ENCODE measurements at regions of chrX and their contacts with region 1.

Region 1: GRCh38 chrX:38304010-38304409 is 23.3 kb downstream of the RPGR start:
- DNase-seq: no peak
- H3K4me3 ChIP-seq: 0 out of 4 replicates have a peak overlapping the region, but pooled peaks of 1 of the 2 experiments have one; percentile 3
- H3K27ac ChIP-seq: no peak overlapping the region
- H3K4me1 ChIP-seq: no peaks in the 10 kb centered on the region
- H3K27me3 ChIP-seq: no peaks in the 10 kb centered on the region
- CTCF ChIP-seq: peak; percentile 50
- EP300 ChIP-seq: no peak
- RAD21 ChIP-seq: no peak

Region 2: DNA sequence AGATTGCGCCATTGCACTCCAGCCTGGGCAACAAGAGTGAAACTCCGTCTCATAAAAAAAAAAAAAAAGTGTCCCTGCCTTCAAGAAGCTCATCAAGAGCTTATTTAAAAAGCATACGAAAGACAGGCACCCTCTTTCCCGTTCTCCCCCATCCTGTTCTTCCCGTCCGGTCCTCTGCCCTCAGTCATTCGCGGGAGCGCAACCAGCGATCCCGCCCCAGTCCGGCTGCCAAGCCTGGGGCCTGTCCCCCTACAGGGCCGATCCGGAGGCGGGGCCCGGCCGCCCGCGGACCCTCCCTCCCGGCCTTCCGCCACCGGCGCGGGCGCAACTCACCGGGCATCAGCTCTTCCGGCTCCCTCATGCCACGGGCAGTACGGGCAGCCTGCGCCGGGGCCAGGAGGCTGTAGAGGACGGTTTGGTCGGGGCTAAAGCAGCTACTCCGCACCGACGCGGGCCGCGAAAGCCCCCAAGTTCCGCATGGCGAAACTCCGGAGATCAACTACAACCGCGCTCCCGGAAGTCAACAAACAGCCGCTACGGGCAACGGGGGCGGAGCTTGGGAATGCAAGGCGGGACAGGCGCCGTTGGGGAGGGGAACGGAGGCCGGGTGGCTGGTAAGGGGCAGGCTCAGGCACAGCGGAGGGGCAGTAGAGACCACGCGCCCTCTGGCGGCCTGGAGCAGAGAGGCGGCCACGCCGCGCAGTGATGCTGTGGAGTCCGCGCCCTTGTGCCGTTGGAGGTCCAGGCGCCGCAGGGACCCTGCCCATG is 23.2 kb after region 1 on chrX and contains the start of gene RPGR:
- CTCF ChIA-PET with region 1: interaction called, 13 read pairs
- POLR2A ChIA-PET with region 1: no interaction called
- DNase-seq: peak; percentile 91
- H3K4me3 ChIP-seq: peak within 1 kb of the TSS; percentile 69 to 73
- H3K27ac ChIP-seq: peak within 1 kb of the TSS; percentile 56 to 96
- H3K4me1 ChIP-seq: peaks cover 0 to 3% of the 10 kb centered on the region in 2 experiments; a peak in 1 of 4 replicates
- H3K27me3 ChIP-seq: no peaks in the 10 kb centered on the region
- CTCF ChIP-seq: peak; percentile 71
- EP300 ChIP-seq: no peak
- RAD21 ChIP-seq: peak; percentile 64
- polyA plus RNA-seq, gene RPGR: 1.2 and 3.0 TPM in 2 replicates

Measured in SK-N-SH (cell line).